ENCODE measurements at regions of chr7 and their contacts with region 1.

Region 1: GRCh38 chr7:95476904-95477594 is 8.7 kb upstream of the ASB4 start:
- DNase-seq: no peak
- H3K4me3 ChIP-seq: no peak overlapping the region
- H3K27me3 ChIP-seq: peaks cover 2% of the 10 kb centered on the region; the same call in 1 of the 2 replicates
- CTCF ChIP-seq: peak; percentile 72

Region 2: DNA sequence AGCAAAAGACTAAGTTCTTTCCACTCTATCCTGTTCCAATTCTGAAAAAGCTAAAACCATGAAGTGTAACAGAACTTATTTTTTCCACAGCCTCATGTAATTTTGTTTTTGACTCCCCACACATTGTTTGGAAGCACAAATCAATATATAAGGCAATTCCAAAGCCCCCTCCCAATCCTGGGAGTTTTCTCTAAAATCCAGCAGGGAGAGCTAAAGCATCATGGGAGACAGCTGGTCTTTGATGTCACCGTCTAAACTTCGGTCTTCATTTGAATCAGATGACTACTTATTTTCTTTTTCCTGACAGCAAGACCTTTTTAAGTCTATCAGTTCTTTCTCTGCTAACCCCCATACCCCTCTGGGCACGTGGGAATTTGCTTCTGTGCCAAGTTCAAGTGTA is 119.4 kb before region 1 on chr7:
- CTCF ChIA-PET with region 1: interaction called, 10 read pairs
- POLR2A ChIA-PET with region 1: no interaction called
- DNase-seq: no peak
- H3K4me3 ChIP-seq: no peak overlapping the region
- H3K27me3 ChIP-seq: no peaks in the 10 kb centered on the region
- CTCF ChIP-seq: peak; percentile 8; the same call in 1 of the 2 replicates

Region 3: DNA sequence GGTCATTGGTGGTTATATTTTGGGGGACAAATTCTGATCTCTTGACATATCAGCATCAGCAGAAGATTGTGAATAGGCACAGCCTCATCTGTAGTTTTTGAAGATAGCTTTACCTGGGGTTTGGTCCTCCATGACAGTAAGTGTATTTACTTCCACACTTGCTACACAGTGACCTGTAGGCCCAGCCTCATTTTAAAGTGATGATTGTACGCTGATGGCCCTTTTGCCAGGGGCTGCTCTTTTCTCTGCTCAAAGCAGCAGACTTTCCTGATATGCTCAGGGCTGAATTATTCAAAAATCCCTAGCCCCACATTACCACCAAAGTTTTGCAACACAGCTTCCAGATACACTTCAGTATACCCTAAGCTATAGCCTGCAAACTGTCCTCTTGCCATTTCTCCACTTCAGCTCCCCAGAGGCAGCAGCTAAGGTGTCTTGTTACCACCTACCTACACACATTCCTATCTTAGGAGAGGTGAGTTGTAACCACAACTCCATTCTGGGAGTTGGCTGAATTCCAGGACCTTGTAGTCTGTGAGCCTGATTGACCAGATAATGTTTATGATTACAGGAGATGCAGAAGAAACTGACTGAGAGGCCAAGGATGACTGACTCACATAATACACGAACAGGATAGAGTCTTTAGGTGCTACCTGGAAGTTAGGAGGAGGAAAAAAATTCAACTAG is 14.7 kb after region 1 on chr7:
- CTCF ChIA-PET with region 1: interaction called, 24 read pairs
- POLR2A ChIA-PET with region 1: no interaction called
- DNase-seq: no peak
- H3K4me3 ChIP-seq: no peak overlapping the region
- H3K27me3 ChIP-seq: no peaks in the 10 kb centered on the region
- CTCF ChIP-seq: no peak

Region 4: DNA sequence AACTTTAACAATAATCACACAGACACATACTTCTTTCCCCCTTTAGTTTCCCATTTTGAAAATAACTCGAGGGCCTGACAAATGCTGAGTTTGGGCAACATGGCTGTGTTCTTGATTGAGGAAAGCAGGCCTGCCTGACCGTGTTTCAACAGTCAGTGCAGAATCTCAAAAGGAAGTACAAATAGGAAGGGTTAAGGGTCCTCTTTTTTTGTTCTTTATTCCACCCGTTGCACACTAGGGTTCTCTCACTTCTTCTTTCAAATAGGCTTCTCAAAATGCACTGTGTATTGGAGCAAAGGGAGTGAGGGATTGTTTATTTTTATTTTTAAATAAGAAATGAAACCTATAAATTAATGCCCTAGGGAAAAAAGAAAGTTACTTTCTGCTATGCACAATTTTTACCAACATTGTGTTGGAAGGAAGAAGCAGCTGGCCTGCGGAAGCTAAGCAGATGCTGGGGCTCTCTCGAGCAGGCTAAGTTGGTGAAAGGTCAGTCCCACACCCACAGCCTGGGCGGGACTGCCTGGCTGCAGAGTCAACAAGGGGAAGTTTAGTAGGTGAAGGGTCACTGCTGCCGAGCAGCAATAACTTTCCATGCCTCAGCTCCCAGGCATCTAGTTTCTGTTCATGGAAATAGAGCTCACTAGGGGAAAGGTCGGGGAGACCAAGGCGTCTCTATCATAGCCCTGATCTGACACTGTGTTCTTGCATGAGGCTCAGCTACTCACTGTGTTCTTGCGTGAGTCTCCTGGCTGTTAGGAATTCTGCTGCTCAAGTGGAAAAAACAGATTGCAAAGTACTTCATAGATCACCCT is 131.5 kb after region 1 on chr7:
- CTCF ChIA-PET with region 1: no interaction called
- POLR2A ChIA-PET with region 1: no interaction called
- DNase-seq: peak; percentile 93
- H3K4me3 ChIP-seq: no peak overlapping the region
- H3K27me3 ChIP-seq: no peaks in the 10 kb centered on the region
- CTCF ChIP-seq: no peak

Measured in BJ (cell line).